ENCODE measurements at regions of chr3 and their contacts with region 1.

Region 1: GRCh38 chr3:157130467-157131251 is 29.3 kb downstream of the CCNL1 start:
- DNase-seq: peak in 4 of 5 donors; percentile 46 to 66 (median 55)
- ATAC-seq: peak; percentile 3 to 65 (median 18)
- H3K4me3 ChIP-seq: peak overlapping the region in 10 of 12 donors; percentile 12 to 43 (median 32)
- H3K27ac ChIP-seq: peak overlapping the region; percentile 68 to 88 (median 80)
- H3K4me1 ChIP-seq: peaks cover 5 to 77% (median 52%) of the 10 kb centered on the region in 12 donors
- H3K27me3 ChIP-seq: no peaks in the 10 kb centered on the region
- CTCF ChIP-seq: peak; percentile 47 to 77 (median 70)
- POLR2A ChIP-seq: no peak

Region 2: GRCh38 chr3:156535162-156535627 is 595.5 kb before region 1 on chr3:
- intact Hi-C with region 1: loop called in 9 of 10 experiments (anchors 5 to 10 kb)
- DNase-seq: peak in 4 of 5 donors; percentile 58 to 89 (median 74)
- ATAC-seq: peak; percentile 81 to 96 (median 94)
- H3K4me3 ChIP-seq: no peak overlapping the region
- H3K27ac ChIP-seq: peak overlapping the region; percentile 16 to 84 (median 68)
- H3K4me1 ChIP-seq: peaks cover 0 to 31% (median 15%) of the 10 kb centered on the region in 12 donors
- H3K27me3 ChIP-seq: no peaks in the 10 kb centered on the region
- CTCF ChIP-seq: peak in 7 of 12 donors; percentile 12 to 46 (median 37)
- POLR2A ChIP-seq: no peak

Region 3: DNA sequence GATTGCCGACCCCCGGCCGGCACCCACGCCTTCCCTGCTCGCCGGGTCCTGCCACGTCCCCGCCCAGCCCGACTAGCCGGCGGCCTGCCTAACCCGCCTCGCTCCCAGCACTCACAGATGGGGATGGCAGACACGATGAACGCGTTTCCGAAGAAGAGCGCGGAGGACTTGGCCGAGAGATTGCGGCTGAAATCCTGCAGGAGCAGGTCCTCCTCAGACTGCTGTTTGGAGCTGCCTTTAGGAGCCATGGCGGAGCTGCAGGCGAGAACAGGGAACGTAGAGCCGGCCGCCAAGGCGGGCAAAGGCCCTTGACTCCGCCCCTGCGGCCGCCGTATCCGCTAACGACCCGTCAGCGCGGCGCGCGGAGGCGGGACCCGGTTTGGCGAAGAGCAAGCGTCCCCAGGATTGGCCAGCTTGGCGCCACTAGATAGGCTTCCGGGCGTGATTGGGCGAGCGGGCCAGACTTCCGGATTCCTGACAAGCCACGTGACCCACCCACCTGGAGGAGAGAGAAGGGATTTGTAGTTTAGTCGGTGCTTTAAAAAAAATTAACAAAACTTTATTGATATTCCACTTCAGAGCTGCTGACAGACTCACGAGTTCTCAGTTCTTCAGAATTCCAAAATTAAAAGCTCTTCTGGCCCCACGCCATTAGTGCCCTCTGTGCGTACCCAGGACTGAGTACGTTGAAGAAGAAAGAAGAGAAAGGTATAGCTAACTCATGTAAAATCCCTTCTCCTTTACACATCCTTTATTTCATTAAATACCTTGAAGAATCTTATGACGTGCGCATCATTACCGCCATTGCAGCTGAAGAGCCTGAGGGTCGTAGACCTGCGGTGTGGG is 575.6 kb before region 1 on chr3 and contains the start of gene SSR3:
- intact Hi-C with region 1: loop called in 1 of 10 experiments (anchors 10 kb)
- DNase-seq: peak; percentile 100
- ATAC-seq: peak; percentile 99 to 100 (median 99)
- H3K4me3 ChIP-seq: peak within 1 kb of the TSS; percentile 81 to 98 (median 90)
- H3K27ac ChIP-seq: peak within 1 kb of the TSS; percentile 84 to 98 (median 93)
- H3K4me1 ChIP-seq: peaks cover 8 to 62% (median 41%) of the 10 kb centered on the region in 12 donors
- H3K27me3 ChIP-seq: no peaks in the 10 kb centered on the region
- CTCF ChIP-seq: peak in 9 of 12 donors; percentile 11 to 41 (median 19)
- POLR2A ChIP-seq: peak; percentile 56 to 90
- total RNA-seq, gene SSR3: 171 to 456 (median 197) TPM

Region 4: DNA sequence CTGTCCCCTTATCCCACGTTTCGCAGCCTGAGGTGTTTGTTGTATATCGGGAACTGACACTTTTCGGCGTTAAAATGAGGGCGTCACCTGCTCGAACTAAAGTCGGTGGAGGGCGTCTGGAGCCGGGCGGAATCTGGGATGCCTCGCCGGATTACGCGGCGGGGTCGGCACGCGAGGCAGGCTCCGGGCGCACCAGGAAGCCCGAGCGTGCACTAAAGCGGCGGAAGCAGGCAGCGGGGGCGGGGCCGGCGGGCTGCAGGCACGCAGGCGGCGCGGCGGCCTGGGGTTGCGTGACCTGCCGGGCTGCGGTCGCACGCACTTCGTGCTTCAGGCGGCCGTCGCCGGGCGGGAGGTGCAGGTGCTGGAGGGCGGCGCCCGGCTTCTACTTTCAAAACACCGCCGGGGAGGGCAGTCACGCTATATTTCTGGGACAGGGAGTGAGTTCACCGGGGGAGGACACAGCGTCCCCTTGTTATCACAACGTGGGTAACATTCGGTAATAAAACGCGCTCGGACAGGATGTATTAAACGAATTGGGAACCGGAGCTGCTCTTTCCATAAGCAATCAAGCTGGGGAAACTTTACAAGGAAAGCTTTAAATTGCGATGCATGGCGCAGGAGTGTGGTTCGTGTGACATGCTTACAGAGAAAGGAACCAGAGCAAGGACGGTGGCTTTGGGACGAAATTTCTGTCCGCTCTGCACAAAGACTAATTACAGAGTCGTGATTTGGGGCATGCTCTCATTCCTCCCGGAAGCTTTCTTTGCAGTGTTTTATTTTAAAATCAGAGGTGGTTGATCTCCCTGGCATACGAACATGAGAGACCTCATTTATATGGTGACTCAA is 313.6 kb before region 1 on chr3:
- intact Hi-C with region 1: loop called in 7 of 10 experiments (anchors 5 to 10 kb)
- DNase-seq: peak; percentile 82 to 93 (median 88)
- ATAC-seq: peak; percentile 83 to 94 (median 90)
- H3K4me3 ChIP-seq: peak overlapping the region; percentile 40 to 76 (median 66)
- H3K27ac ChIP-seq: peak overlapping the region; percentile 51 to 93 (median 84)
- H3K4me1 ChIP-seq: peaks cover 0 to 32% (median 12%) of the 10 kb centered on the region in 12 donors
- H3K27me3 ChIP-seq: no peaks in the 10 kb centered on the region
- CTCF ChIP-seq: peak in 3 of 12 donors; percentile 23 to 31 (median 25)
- POLR2A ChIP-seq: peak in 1 of 2 donors; percentile 58

Region 5: DNA sequence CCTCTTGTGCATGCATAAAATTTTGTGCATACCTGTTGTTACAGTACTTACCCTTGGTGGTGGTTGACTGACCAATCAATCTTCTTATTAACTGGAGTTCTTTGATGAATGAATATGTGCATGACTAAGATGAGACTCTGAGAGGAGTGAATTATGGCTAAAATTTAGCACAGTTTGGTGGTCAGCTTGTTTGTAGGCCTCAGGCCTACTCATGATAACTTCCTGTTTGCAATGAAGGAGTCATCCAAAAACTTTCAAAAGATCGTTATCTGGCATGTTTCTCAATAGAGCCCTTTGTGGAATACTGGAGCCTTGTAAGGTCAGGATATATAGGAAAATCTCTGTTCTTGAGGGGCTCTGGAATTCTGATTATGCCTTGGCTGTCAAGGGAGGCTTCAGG is 238.0 kb before region 1 on chr3:
- intact Hi-C with region 1: loop called in 1 of 10 experiments (anchors 10 kb)
- DNase-seq: no peak
- ATAC-seq: no peak
- H3K4me3 ChIP-seq: no peak overlapping the region
- H3K27ac ChIP-seq: no peak overlapping the region
- H3K4me1 ChIP-seq: no peaks in the 10 kb centered on the region
- H3K27me3 ChIP-seq: no peaks in the 10 kb centered on the region
- CTCF ChIP-seq: no peak
- POLR2A ChIP-seq: no peak

Region 6: GRCh38 chr3:157067114-157067513 is 63.5 kb before region 1 on chr3:
- intact Hi-C with region 1: no loop called
- DNase-seq: no peak
- ATAC-seq: no peak
- H3K4me3 ChIP-seq: no peak overlapping the region
- H3K27ac ChIP-seq: no peak overlapping the region
- H3K4me1 ChIP-seq: peaks cover 0 to 23% (median 0%) of the 10 kb centered on the region in 12 donors
- H3K27me3 ChIP-seq: no peaks in the 10 kb centered on the region
- CTCF ChIP-seq: no peak
- POLR2A ChIP-seq: no peak

Region 7: GRCh38 chr3:157148196-157148889 is 17.7 kb after region 1 on chr3:
- intact Hi-C with region 1: no loop called
- DNase-seq: no peak
- ATAC-seq: peak in 2 of 4 donors; percentile 13 to 17
- H3K4me3 ChIP-seq: no peak overlapping the region
- H3K27ac ChIP-seq: no peak overlapping the region
- H3K4me1 ChIP-seq: peaks cover 0 to 14% (median 1%) of the 10 kb centered on the region in 12 donors
- H3K27me3 ChIP-seq: no peaks in the 10 kb centered on the region
- CTCF ChIP-seq: no peak
- POLR2A ChIP-seq: no peak